Activated T-helper 1 cell treated with anti-CD3 and anti-CD28 coated beads, Interleukin-12 subunit alpha, Interleukin-12 subunit beta, Interleukin-2, Interleukin-4 antibody, amounts not matched to agents 30 ng/mL and 10 ng/mL and 1 ng/mL, durations not matched to agents 14 hours and 24 hours and 36 hours (primary cell): ENCODE measurements at regions of chr11 and their contacts with region 1.

Region 1: GRCh38 chr11:17528181-17528691 is 16.0 kb downstream of the USH1C start:
- DNase-seq: peak; percentile 3
- H3K4me3 Mint-ChIP-seq: no peak overlapping the region
- H3K27ac Mint-ChIP-seq: no peak overlapping the region
- H3K4me1 Mint-ChIP-seq: no peaks in the 10 kb centered on the region
- H3K27me3 Mint-ChIP-seq: no peaks in the 10 kb centered on the region

Region 2: GRCh38 chr11:17384002-17384511 is 144.2 kb before region 1 on chr11:
- intact Hi-C with region 1: loop called (anchors 1 kb)
- DNase-seq: peak; percentile 50
- H3K4me3 Mint-ChIP-seq: no peak overlapping the region
- H3K27ac Mint-ChIP-seq: no peak overlapping the region
- H3K4me1 Mint-ChIP-seq: no peaks in the 10 kb centered on the region
- H3K27me3 Mint-ChIP-seq: peaks cover 11% of the 10 kb centered on the region

Region 3: GRCh38 chr11:17864478-17864941 is 336.3 kb after region 1 on chr11:
- intact Hi-C with region 1: no loop called
- DNase-seq: no peak
- H3K4me3 Mint-ChIP-seq: no peak overlapping the region
- H3K27ac Mint-ChIP-seq: no peak overlapping the region
- H3K4me1 Mint-ChIP-seq: no peaks in the 10 kb centered on the region
- H3K27me3 Mint-ChIP-seq: no peaks in the 10 kb centered on the region